Posterior vena cava (tissue), 2 donors: ENCODE measurements at regions of chr2 and their contacts with region 1.

Region 1: DNA sequence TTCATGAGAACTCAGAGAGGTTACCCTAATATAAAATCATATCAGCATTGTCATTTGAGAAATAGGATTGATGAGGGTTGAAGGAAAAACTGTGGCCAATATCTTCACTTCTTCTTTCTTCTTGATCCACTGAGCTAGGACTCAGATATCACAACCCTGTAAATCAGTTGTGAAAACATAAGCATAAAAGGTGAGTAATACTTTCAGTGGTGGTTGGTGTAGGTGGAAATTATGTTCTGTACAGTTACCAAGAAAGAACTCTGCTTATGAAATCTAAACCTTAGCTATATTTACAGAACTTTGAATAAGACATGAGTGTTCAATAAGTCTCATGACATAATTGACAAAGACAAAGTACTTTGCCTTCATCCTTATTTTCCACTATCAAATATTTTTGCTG is 56.3 kb downstream of the PAX3 start:
- DNase-seq: no peak

Region 2: GRCh38 chr2:222268311-222268990 is 25.9 kb after region 1 on chr2:
- intact Hi-C with region 1: loop called in 1 of 2 experiments (anchors 2 kb)
- DNase-seq: no peak